Endothelial cell of umbilical vein (primary cell): ENCODE measurements at regions of chr16 and their contacts with region 1.

Region 1: GRCh38 chr16:1054660-1055556 is 17.6 kb upstream of the SSTR5 start:
- DNase-seq: peak; percentile 36
- H3K4me3 ChIP-seq: no peak overlapping the region
- H3K27ac ChIP-seq: no peak overlapping the region
- H3K4me1 ChIP-seq: no peaks in the 10 kb centered on the region
- H3K27me3 ChIP-seq: no peaks in the 10 kb centered on the region
- CTCF ChIP-seq: peak; percentile 91
- POLR2A ChIP-seq: no peak

Region 2: DNA sequence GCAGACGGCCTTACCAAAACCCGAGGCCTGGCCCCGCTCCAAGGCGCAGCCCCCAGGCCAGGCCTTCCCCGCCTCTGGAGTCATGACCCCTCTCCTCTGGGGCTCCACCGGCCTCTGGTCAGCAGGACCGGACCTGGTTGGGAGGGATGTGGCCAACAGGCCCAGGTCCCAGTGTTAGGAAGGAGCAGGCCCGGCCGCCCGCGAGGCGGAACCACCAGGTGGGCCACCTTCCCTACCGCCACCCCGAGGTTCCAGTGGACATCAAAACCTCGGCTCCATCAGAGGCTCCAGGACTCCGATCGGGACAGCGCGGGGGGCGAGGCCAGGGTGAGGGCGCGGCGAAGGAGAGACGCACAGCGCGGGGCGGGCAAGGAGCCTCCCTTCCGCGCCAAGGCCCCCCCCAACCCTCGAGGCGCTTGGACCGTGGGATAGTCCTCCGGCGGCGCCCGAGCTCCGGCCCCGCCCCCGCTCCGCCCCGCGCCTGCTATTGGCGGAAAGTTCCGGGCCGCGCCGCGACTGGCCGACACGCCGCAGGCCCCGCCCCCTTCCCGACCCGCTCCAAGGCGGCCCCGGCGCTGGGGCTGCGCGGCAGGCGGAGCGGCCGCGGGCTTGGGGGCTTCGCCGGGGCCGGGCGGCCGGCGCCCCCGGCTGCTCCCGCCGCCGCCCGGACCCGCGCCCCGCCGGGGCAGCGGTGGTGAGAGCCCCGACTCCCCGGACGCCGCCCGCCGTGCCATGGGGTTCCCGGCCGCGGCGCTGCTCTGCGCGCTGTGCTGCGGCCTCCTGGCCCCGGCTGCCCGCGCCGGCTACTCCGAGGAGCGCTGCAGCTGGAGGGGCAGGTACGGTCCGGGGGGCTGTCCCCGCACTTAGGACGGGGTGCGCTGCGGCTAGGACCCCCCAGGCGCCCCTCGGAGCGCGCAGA is 340.1 kb before region 1 on chr16 and contains the start of gene METRN:
- CTCF ChIA-PET with region 1: interaction called, 31 read pairs
- POLR2A ChIA-PET with region 1: no interaction called
- dilution Hi-C with region 1: no loop called
- intact Hi-C with region 1: loop called (anchors 2 kb)
- DNase-seq: peak; percentile 78
- H3K4me3 ChIP-seq: peak within 1 kb of the TSS; percentile 42 to 58 (median 51)
- H3K27ac ChIP-seq: no peak within 1 kb of the TSS
- H3K4me1 ChIP-seq: peaks cover 10% of the 10 kb centered on the region
- H3K27me3 ChIP-seq: no peaks in the 10 kb centered on the region
- CTCF ChIP-seq: no peak
- POLR2A ChIP-seq: no peak
- total RNA-seq, gene METRN: 14.1 and 16.1 TPM in 2 replicates

Region 3: GRCh38 chr16:813204-813915 is 241.5 kb before region 1 on chr16:
- CTCF ChIA-PET with region 1: interaction called, 10 read pairs
- POLR2A ChIA-PET with region 1: no interaction called
- dilution Hi-C with region 1: no loop called
- intact Hi-C with region 1: loop called (anchors 1 kb)
- DNase-seq: no peak
- H3K4me3 ChIP-seq: no peak overlapping the region
- H3K27ac ChIP-seq: no peak overlapping the region
- H3K4me1 ChIP-seq: no peaks in the 10 kb centered on the region
- H3K27me3 ChIP-seq: peaks cover 2 to 20% of the 10 kb centered on the region in 2 experiments
- CTCF ChIP-seq: peak; percentile 49 to 67
- POLR2A ChIP-seq: no peak

Region 4: GRCh38 chr16:1042866-1043265 is 12.0 kb before region 1 on chr16:
- CTCF ChIA-PET with region 1: interaction called, 20 read pairs
- POLR2A ChIA-PET with region 1: no interaction called
- dilution Hi-C with region 1: no loop called
- intact Hi-C with region 1: no loop called
- DNase-seq: no peak
- H3K4me3 ChIP-seq: no peak overlapping the region
- H3K27ac ChIP-seq: no peak overlapping the region
- H3K4me1 ChIP-seq: no peaks in the 10 kb centered on the region
- H3K27me3 ChIP-seq: no peaks in the 10 kb centered on the region
- CTCF ChIP-seq: no peak
- POLR2A ChIP-seq: no peak

Region 5: GRCh38 chr16:1078579-1079021 is 23.7 kb after region 1 on chr16:
- CTCF ChIA-PET with region 1: interaction called, 16 read pairs
- POLR2A ChIA-PET with region 1: no interaction called
- dilution Hi-C with region 1: no loop called
- intact Hi-C with region 1: no loop called
- DNase-seq: peak; percentile 95
- H3K4me3 ChIP-seq: no peak overlapping the region
- H3K27ac ChIP-seq: no peak overlapping the region
- H3K4me1 ChIP-seq: peaks cover 30% of the 10 kb centered on the region
- H3K27me3 ChIP-seq: no peaks in the 10 kb centered on the region
- CTCF ChIP-seq: no peak
- POLR2A ChIP-seq: no peak

Region 6: GRCh38 chr16:1105888-1106620 is 51.1 kb after region 1 on chr16:
- CTCF ChIA-PET with region 1: interaction called, 9 read pairs
- POLR2A ChIA-PET with region 1: interaction called, 3 read pairs
- dilution Hi-C with region 1: no loop called
- intact Hi-C with region 1: loop called (anchors 1 kb)
- DNase-seq: peak; percentile 57
- H3K4me3 ChIP-seq: no peak overlapping the region
- H3K27ac ChIP-seq: no peak overlapping the region
- H3K4me1 ChIP-seq: no peaks in the 10 kb centered on the region
- H3K27me3 ChIP-seq: no peaks in the 10 kb centered on the region
- CTCF ChIP-seq: peak; percentile 73 to 99
- POLR2A ChIP-seq: no peak

Region 7: GRCh38 chr16:2415085-2415484 is 1360.2 kb after region 1 on chr16:
- CTCF ChIA-PET with region 1: no interaction called
- POLR2A ChIA-PET with region 1: no interaction called
- dilution Hi-C with region 1: no loop called
- intact Hi-C with region 1: no loop called
- DNase-seq: no peak
- H3K4me3 ChIP-seq: no peak overlapping the region
- H3K27ac ChIP-seq: no peak overlapping the region
- H3K4me1 ChIP-seq: no peaks in the 10 kb centered on the region
- H3K27me3 ChIP-seq: peaks cover 5 to 12% of the 10 kb centered on the region in 2 experiments
- CTCF ChIP-seq: no peak
- POLR2A ChIP-seq: no peak